ENCODE measurements at regions of chr20 and their contacts with region 1.

Region 1: DNA sequence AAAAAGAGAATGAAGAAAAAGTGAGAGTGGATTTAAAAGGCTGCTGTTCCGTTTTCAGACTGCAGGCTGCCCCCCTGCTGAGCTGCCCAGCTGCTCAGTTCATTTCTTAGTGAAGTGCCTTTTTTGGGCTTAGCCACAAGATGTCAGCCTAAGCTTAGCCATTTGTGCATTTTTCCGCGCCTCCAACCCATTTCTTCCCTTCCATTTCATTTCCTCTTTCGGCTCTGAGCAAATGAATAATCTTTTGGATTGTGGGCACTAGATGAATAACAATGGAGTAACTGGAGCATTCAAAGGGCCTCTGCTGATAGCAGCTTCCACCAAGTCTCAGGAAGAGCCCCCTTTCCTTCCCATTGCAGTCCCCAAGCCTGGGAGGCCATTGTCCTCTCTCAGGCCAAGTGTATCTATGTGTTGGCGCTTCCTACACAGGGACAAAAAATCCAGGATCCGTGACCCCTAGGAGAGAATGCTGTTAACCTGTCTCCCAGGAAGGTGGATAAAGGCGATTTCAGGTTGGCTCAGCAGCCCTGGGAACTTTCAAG is 83.5 kb upstream of the SPTLC3 start:
- DNase-seq: peak; percentile 79
- H3K4me3 ChIP-seq: no peak overlapping the region
- H3K4me3 Mint-ChIP-seq: peak overlapping the region; percentile 43
- H3K27ac Mint-ChIP-seq: no peak overlapping the region
- H3K4me1 ChIP-seq: peaks cover 27% of the 10 kb centered on the region
- H3K4me1 Mint-ChIP-seq: peaks cover 23% of the 10 kb centered on the region
- H3K27me3 ChIP-seq: no peaks in the 10 kb centered on the region
- H3K27me3 Mint-ChIP-seq: no peaks in the 10 kb centered on the region
- CTCF ChIP-seq: peak; percentile 93 to 97

Region 2: DNA sequence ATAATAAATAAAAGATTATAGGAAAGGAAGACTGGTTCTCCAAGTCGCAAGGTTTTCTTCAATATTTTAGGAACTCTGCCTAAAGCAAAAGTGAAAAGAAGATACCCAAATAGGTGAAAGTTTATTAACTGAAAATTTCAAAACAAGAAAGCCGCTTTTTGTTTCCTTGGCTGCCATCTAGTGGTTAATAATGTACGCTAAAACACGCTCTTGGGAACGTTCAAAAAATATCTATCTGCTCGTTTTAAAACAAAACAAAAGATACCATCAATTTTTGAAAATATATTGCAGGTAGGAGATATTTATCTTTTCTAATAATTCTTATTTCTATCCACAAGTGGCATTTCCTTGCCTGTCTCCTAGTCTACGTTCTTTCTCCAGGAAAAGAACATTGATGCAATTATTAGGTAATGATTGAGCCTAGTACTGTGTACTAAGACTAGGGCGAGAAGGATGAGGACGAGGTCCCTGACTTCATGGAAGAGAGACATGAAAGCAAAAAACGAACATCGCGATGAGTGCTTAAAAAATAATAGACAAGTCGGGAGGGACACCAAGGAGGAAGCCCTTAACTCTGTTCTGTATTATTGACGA is 180.7 kb after region 1 on chr20:
- CTCF ChIA-PET with region 1: interaction called, 4 read pairs
- POLR2A ChIA-PET with region 1: no interaction called
- intact Hi-C with region 1: loop called (anchors 1 kb)
- DNase-seq: peak in 1 of 2 experiments; percentile 37
- H3K4me3 ChIP-seq: no peak overlapping the region
- H3K4me3 Mint-ChIP-seq: no peak overlapping the region
- H3K27ac Mint-ChIP-seq: no peak overlapping the region
- H3K4me1 ChIP-seq: peaks cover 46% of the 10 kb centered on the region
- H3K4me1 Mint-ChIP-seq: peaks cover 23% of the 10 kb centered on the region
- H3K27me3 ChIP-seq: no peaks in the 10 kb centered on the region
- H3K27me3 Mint-ChIP-seq: no peaks in the 10 kb centered on the region
- CTCF ChIP-seq: peak; percentile 70 to 71

Region 3: DNA sequence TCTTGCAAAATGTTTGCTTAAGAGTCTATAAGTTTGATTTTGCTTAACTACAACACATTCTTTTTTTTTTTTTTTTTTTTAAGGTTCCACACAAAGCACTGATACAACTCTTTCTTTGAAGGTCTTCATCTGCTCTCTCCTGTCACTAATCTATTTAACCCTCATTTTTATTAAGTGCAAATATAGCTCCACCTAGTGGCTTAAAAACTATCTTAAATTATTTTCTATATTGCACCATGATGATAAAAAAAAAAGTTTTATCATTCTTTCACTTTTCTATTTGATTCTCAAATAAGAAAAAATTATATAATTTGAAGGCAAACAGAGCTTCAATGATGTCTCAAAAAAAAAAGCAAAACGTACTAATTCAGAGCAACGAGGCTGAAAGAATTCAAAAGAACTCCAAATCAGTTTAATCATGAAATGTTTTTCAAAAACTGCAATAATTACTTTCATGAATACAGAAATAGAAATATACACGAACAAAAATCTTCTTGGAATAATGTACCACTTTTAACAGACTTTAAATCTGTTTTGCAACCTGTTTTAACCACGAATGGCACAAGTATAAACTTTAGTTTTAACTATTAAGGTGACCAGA is 846.7 kb after region 1 on chr20:
- CTCF ChIA-PET with region 1: no interaction called
- POLR2A ChIA-PET with region 1: no interaction called
- intact Hi-C with region 1: loop called (anchors 5 kb)
- DNase-seq: no peak
- H3K4me3 ChIP-seq: no peak overlapping the region
- H3K4me3 Mint-ChIP-seq: no peak overlapping the region
- H3K27ac Mint-ChIP-seq: no peak overlapping the region
- H3K4me1 ChIP-seq: no peaks in the 10 kb centered on the region; the same call in 1 of the 2 replicates
- H3K4me1 Mint-ChIP-seq: no peaks in the 10 kb centered on the region
- H3K27me3 ChIP-seq: no peaks in the 10 kb centered on the region
- H3K27me3 Mint-ChIP-seq: no peaks in the 10 kb centered on the region
- CTCF ChIP-seq: peak in 1 of 2 experiments; percentile 60

Region 4: GRCh38 chr20:13784893-13785715 is 859.8 kb after region 1 on chr20 and contains the starts of genes ESF1 and NDUFAF5:
- CTCF ChIA-PET with region 1: interaction called, 7 read pairs
- POLR2A ChIA-PET with region 1: no interaction called
- intact Hi-C with region 1: loop called (anchors 1 kb)
- DNase-seq: peak; percentile 95 to 98
- H3K4me3 ChIP-seq: peak within 1 kb of the TSS; percentile 83
- H3K4me3 Mint-ChIP-seq: peak within 1 kb of the TSS; percentile 93
- H3K27ac Mint-ChIP-seq: peak within 1 kb of the TSS; percentile 98
- H3K4me1 ChIP-seq: peaks cover 12% of the 10 kb centered on the region; the same call in 1 of the 2 replicates
- H3K4me1 Mint-ChIP-seq: peaks cover 14% of the 10 kb centered on the region
- H3K27me3 ChIP-seq: no peaks in the 10 kb centered on the region
- H3K27me3 Mint-ChIP-seq: no peaks in the 10 kb centered on the region
- CTCF ChIP-seq: no peak
- total RNA-seq, gene ESF1: 21.3 and 22.7 TPM in 2 replicates
- total RNA-seq, gene NDUFAF5: 34.9 and 38.3 TPM in 2 replicates